K562 (cell line): ENCODE measurements at regions of chr3 and their contacts with region 1.

Region 1: DNA sequence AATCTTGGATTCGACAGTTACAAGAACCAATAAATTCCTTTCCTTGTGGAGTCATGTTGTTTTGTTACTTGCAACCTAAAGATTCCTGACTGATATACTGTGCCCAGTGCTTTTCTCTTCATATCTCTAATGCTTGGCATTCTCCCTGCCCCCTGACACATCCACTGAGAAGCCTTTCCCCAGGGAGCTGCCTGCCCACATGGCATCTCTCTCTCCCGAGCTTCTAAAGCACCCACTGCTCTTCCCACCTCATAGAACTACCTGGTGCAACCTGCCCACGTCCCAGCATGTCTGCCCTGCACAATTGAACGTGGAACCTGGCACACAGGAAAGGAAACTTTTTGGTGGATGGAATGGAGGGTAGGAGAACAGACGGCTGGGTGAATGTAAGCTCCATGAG is 6.8 kb downstream of the CYP8B1 start:
- DNase-seq: no peak
- ATAC-seq: no peak
- H3K4me3 ChIP-seq: no peak overlapping the region
- H3K27ac ChIP-seq: no peak overlapping the region
- H3K4me1 ChIP-seq: no peaks in the 10 kb centered on the region; a peak in 1 of 5 replicates
- H3K27me3 ChIP-seq: peaks cover 25 to 86% of the 10 kb centered on the region in 2 experiments; a peak in 4 of 5 replicates
- CTCF ChIP-seq: no peak
- EP300 ChIP-seq: no peak
- POLR2A ChIP-seq: no peak
- RAD21 ChIP-seq: no peak

Region 2: GRCh38 chr3:42804106-42804830 is 64.6 kb before region 1 on chr3 and contains the start of gene HIGD1A:
- CTCF ChIA-PET with region 1: no interaction called
- POLR2A ChIA-PET with region 1: no interaction called
- in situ Hi-C with region 1: no loop called
- intact Hi-C with region 1: no loop called
- DNase-seq: peak; percentile 99 to 100 (median 100)
- ATAC-seq: peak; percentile 98
- H3K4me3 ChIP-seq: peak within 1 kb of the TSS; percentile 75
- H3K27ac ChIP-seq: peak within 1 kb of the TSS; percentile 83
- H3K4me1 ChIP-seq: peaks cover 20 to 26% of the 10 kb centered on the region in 2 experiments; a peak in 4 of 5 replicates
- H3K27me3 ChIP-seq: no peaks in the 10 kb centered on the region
- CTCF ChIP-seq: no peak
- EP300 ChIP-seq: no peak
- POLR2A ChIP-seq: peak; percentile 96
- RAD21 ChIP-seq: 0 out of 4 replicates have a peak, but pooled peaks of 1 of the 2 experiments have one; percentile 2
- polyA plus RNA-seq, gene HIGD1A: 1,116 to 1,185 TPM

Region 3: GRCh38 chr3:42880601-42881451 is 12.0 kb after region 1 on chr3:
- CTCF ChIA-PET with region 1: no interaction called
- POLR2A ChIA-PET with region 1: interaction called, 12 read pairs
- in situ Hi-C with region 1: no loop called
- intact Hi-C with region 1: no loop called
- DNase-seq: peak; percentile 94 to 97 (median 95)
- ATAC-seq: peak; percentile 100
- H3K4me3 ChIP-seq: peak overlapping the region; percentile 42
- H3K27ac ChIP-seq: no peak overlapping the region
- H3K4me1 ChIP-seq: peaks cover 0 to 12% of the 10 kb centered on the region in 2 experiments; a peak in 3 of 5 replicates
- H3K27me3 ChIP-seq: peaks cover 3 to 15% of the 10 kb centered on the region in 2 experiments; a peak in 3 of 5 replicates
- CTCF ChIP-seq: peak; percentile 96 to 98 (median 96)
- EP300 ChIP-seq: no peak; the same call in 1 of the 2 replicates
- POLR2A ChIP-seq: peak; percentile 40
- RAD21 ChIP-seq: peak; percentile 99 to 100